ENCODE measurements at regions of chr12 and their contacts with region 1.

Region 1: GRCh38 chr12:54005853-54006686 is 2.7 kb upstream of the HOXC8 start:
- DNase-seq: peak; percentile 95
- ATAC-seq: peak; percentile 92

Region 2: DNA sequence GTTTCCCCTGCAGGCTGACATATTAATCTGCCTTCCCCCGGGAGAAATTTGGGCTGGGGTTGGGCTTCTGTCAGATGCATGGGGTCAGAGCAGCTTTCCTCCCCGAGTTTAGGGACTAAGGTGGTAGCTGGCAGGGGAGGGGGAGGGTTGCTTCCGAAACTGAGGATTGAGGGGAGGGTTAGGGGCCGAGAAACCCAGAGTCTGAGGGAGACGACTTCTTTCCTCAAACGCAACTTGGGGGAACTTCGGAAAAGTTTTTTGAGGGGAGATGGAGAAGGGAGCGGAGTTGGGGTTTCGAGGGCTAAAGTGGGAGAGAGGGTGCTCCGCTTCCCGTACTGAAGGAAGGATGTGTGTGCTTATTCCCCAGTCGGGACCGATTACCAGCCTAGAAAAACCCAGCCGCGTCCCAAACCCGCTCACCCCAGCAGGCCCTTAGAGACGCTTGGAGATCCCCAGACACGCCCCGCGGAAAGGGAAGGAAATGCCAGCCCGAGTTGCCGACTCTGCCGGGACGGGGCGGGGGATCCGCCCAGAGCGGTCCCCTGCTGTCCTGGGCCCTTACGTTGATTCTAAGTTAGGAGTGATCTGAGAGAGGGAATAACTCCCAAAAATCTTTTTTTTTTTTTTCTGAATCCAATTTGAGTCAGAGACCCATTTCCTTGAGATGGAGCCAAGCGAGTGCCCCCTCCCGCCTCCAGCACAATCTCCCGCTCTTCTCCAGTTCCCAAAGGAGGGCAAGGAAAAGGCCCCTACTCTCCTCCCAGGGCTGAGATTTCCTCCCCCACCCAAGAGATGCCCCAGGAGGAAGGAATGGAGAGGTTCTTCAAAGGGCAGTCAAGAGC is 120.8 kb after region 1 on chr12:
- intact Hi-C with region 1: no loop called
- DNase-seq: no peak
- ATAC-seq: peak; percentile 91

Region 3: DNA sequence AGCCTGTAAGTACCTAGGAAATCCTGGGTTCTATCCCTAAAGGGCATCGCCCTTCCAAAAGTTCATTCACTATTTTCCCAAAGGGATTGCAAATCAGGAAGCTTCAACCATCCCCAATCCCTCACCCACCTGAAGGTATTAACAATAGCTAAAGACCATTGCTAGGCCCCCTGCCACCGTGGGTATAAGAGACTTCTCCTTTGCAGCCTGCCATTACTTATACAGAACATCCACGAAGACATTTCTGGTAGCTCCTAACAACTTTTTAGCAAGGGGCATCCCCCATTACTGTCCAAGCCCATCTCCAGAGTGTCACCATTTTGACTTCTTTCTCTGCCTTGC is 183.1 kb after region 1 on chr12:
- intact Hi-C with region 1: loop called (anchors 1 kb)
- DNase-seq: no peak
- ATAC-seq: no peak

Region 4: GRCh38 chr12:54201001-54201794 is 195.1 kb after region 1 on chr12:
- intact Hi-C with region 1: loop called (anchors 2 kb)
- DNase-seq: no peak
- ATAC-seq: peak; percentile 81

Region 5: GRCh38 chr12:54368709-54369583 is 362.9 kb after region 1 on chr12:
- intact Hi-C with region 1: loop called (anchors 10 kb)
- DNase-seq: peak; percentile 94
- ATAC-seq: peak; percentile 62